Pancreas (tissue), 10 donors: ENCODE measurements at regions of chr11 and their contacts with region 1.

Region 1: GRCh38 chr11:103594283-103594682 is 442.2 kb upstream of the DDI1 start:
- DNase-seq: no peak
- ATAC-seq: no peak
- H3K4me3 ChIP-seq: no peak overlapping the region
- H3K27ac ChIP-seq: no peak overlapping the region
- H3K4me1 ChIP-seq: no peaks in the 10 kb centered on the region
- H3K27me3 ChIP-seq: no peaks in the 10 kb centered on the region
- CTCF ChIP-seq: no peak

Region 2: GRCh38 chr11:103202048-103202651 is 392.1 kb before region 1 on chr11:
- intact Hi-C with region 1: loop called in 1 of 3 experiments (anchors 10 kb)
- DNase-seq: no peak
- ATAC-seq: peak in 3 of 4 donors; percentile 56 to 77 (median 74)
- H3K4me3 ChIP-seq: no peak overlapping the region
- H3K27ac ChIP-seq: no peak overlapping the region
- H3K4me1 ChIP-seq: no peaks in the 10 kb centered on the region
- H3K27me3 ChIP-seq: no peaks in the 10 kb centered on the region
- CTCF ChIP-seq: peak in 3 of 4 donors; percentile 18 to 31 (median 21)